HepG2 (cell line): ENCODE measurements at regions of chr1 and their contacts with region 1.

Region 1: GRCh38 chr1:119613769-119614720 is 34.0 kb downstream of the ZNF697 start:
- DNase-seq: peak; percentile 78
- ATAC-seq: peak; percentile 93
- H3K4me3 ChIP-seq: no peak overlapping the region
- H3K27ac ChIP-seq: no peak overlapping the region
- H3K4me1 ChIP-seq: peaks cover 9% of the 10 kb centered on the region
- H3K27me3 ChIP-seq: no peaks in the 10 kb centered on the region
- CTCF ChIP-seq: peak; percentile 95
- EP300 ChIP-seq: no peak
- POLR2A ChIP-seq: no peak
- RAD21 ChIP-seq: peak; percentile 93

Region 2: DNA sequence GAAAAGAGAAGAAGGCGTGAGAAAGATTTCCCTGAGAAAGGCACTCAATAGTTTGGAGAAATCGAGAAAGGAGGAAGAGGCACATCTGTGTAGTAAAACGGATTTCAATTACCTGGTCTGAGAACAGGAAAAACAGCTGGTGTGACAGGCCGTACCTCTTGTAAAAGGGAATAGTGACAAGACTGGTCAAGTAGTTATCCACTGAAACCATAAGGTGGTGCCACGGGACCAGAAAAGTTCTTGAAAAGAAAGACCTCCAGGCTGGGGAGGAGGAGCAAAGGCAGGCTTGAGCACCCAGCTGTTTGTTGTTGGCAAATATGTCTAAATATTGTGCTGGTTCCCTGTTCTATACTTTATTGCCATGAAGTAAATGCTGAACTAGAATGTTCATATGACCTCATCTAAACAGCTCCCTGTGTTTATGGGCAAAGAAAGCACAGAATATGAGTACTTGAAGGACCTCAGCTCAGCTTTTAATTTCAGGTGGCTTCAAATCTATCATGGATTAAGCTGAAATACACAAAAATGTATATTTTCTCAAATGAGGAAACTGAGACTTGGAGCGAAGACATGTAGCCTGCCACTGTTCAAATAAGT is 241.5 kb before region 1 on chr1:
- CTCF ChIA-PET with region 1: no interaction called
- POLR2A ChIA-PET with region 1: no interaction called
- in situ Hi-C with region 1: no loop called
- intact Hi-C with region 1: loop called (anchors 2 kb)
- DNase-seq: peak; percentile 70
- ATAC-seq: peak; percentile 88
- H3K4me3 ChIP-seq: no peak overlapping the region
- H3K27ac ChIP-seq: no peak overlapping the region
- H3K4me1 ChIP-seq: peaks cover 30% of the 10 kb centered on the region
- H3K27me3 ChIP-seq: no peaks in the 10 kb centered on the region
- CTCF ChIP-seq: peak; percentile 72
- EP300 ChIP-seq: no peak
- POLR2A ChIP-seq: no peak
- RAD21 ChIP-seq: no peak; the same call in 1 of the 2 replicates

Region 3: GRCh38 chr1:119647734-119648619 is 33.9 kb after region 1 on chr1 and contains the start of gene ZNF697:
- CTCF ChIA-PET with region 1: interaction called, 9 read pairs
- POLR2A ChIA-PET with region 1: interaction called, 6 read pairs
- in situ Hi-C with region 1: no loop called
- intact Hi-C with region 1: loop called (anchors 1 kb)
- DNase-seq: peak; percentile 92
- ATAC-seq: peak; percentile 94
- H3K4me3 ChIP-seq: peak within 1 kb of the TSS; percentile 74 to 98 (median 97)
- H3K27ac ChIP-seq: peak within 1 kb of the TSS; percentile 76
- H3K4me1 ChIP-seq: peaks cover 43% of the 10 kb centered on the region
- H3K27me3 ChIP-seq: peaks cover 0 to 24% of the 10 kb centered on the region in 2 experiments; a peak in 2 of 5 replicates
- CTCF ChIP-seq: peak; percentile 42
- EP300 ChIP-seq: no peak
- POLR2A ChIP-seq: peak; percentile 75 to 79
- RAD21 ChIP-seq: peak; percentile 38
- total RNA-seq, gene ZNF697: 7.1 and 7.3 TPM in 2 replicates

Region 4: GRCh38 chr1:119662034-119662437 is 48.0 kb after region 1 on chr1:
- CTCF ChIA-PET with region 1: interaction called, 68 read pairs
- POLR2A ChIA-PET with region 1: interaction called, 3 read pairs
- in situ Hi-C with region 1: loop called (anchors 5 kb)
- intact Hi-C with region 1: loop called (anchors 1 kb)
- DNase-seq: no peak
- ATAC-seq: no peak
- H3K4me3 ChIP-seq: no peak overlapping the region
- H3K27ac ChIP-seq: no peak overlapping the region
- H3K4me1 ChIP-seq: peaks cover 17% of the 10 kb centered on the region
- H3K27me3 ChIP-seq: no peaks in the 10 kb centered on the region
- CTCF ChIP-seq: no peak
- EP300 ChIP-seq: no peak
- POLR2A ChIP-seq: no peak
- RAD21 ChIP-seq: no peak

Region 5: GRCh38 chr1:119675349-119676345 is 61.6 kb after region 1 on chr1:
- CTCF ChIA-PET with region 1: interaction called, 35 read pairs
- POLR2A ChIA-PET with region 1: no interaction called
- in situ Hi-C with region 1: no loop called
- intact Hi-C with region 1: no loop called
- DNase-seq: peak; percentile 82
- ATAC-seq: peak; percentile 86
- H3K4me3 ChIP-seq: peak overlapping the region; percentile 43 to 63 (median 57)
- H3K27ac ChIP-seq: no peak overlapping the region
- H3K4me1 ChIP-seq: peaks cover 39% of the 10 kb centered on the region
- H3K27me3 ChIP-seq: no peaks in the 10 kb centered on the region; a peak in 1 of 5 replicates
- CTCF ChIP-seq: peak; percentile 79
- EP300 ChIP-seq: no peak
- POLR2A ChIP-seq: no peak
- RAD21 ChIP-seq: peak; percentile 33; the same call in 1 of the 2 replicates